Gastrocnemius medialis (tissue), 4 donors: ENCODE measurements at regions of chr18 and their contacts with region 1.

Region 1: GRCh38 chr18:36464126-36464651 is 166.7 kb downstream of the FHOD3 start:
- DNase-seq: no peak
- ATAC-seq: no peak
- H3K4me3 ChIP-seq: no peak overlapping the region
- H3K27ac ChIP-seq: no peak overlapping the region
- H3K4me1 ChIP-seq: peaks cover 9 to 19% of the 10 kb centered on the region in 2 donors
- H3K27me3 ChIP-seq: no peaks in the 10 kb centered on the region
- CTCF ChIP-seq: no peak
- POLR2A ChIP-seq: no peak

Region 2: GRCh38 chr18:34828104-34828503 is 1636.1 kb before region 1 on chr18:
- in situ Hi-C with region 1: no loop called
- intact Hi-C with region 1: loop called (anchors 5 kb)
- DNase-seq: no peak
- ATAC-seq: no peak
- H3K4me3 ChIP-seq: no peak overlapping the region
- H3K27ac ChIP-seq: no peak overlapping the region
- H3K4me1 ChIP-seq: no peaks in the 10 kb centered on the region
- H3K27me3 ChIP-seq: no peaks in the 10 kb centered on the region
- CTCF ChIP-seq: no peak
- POLR2A ChIP-seq: no peak

Region 3: DNA sequence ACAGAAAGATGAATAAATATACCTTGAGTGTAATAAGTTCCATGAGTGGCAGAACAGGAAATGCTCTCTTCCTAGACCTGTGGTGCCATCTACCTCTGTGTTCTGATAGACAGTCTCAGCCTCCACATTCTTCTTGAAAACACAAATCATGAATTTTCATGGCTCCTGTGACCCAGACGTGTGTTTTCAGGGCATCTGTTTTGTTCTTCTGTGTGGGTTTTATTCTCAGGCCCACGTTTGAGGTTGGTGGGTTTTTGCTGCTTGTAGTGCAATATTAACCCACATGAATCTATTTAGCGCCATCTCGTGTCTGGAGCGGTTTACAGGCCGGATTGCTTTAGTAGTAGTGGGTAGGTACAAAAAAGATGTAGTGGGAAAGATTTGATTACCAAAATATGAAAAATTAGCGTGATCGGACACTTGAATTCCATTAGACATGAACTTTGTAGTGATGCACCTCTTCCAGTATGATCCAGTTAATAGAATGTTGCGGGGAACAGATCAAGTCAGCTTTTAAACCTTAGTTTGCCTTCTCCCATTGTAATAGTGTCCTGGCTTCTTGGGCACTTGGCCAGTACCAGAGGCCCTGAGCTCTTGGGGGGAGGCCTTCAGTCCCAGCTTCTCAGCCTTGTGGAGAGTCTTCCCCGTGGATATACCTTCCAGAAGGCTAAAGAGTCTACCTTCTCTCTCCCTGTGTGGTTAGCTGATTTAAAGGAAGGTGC is 108.1 kb after region 1 on chr18:
- in situ Hi-C with region 1: no loop called
- intact Hi-C with region 1: loop called (anchors 10 kb)
- DNase-seq: peak in 1 of 2 donors; percentile 42
- ATAC-seq: peak; percentile 77 to 90
- H3K4me3 ChIP-seq: no peak overlapping the region
- H3K27ac ChIP-seq: no peak overlapping the region
- H3K4me1 ChIP-seq: peaks cover 0 to 6% of the 10 kb centered on the region in 2 donors
- H3K27me3 ChIP-seq: no peaks in the 10 kb centered on the region
- CTCF ChIP-seq: peak; percentile 25 to 56 (median 50)
- POLR2A ChIP-seq: no peak